Sigmoid colon (tissue), 7 donors: ENCODE measurements at regions of chr1 and their contacts with region 1.

Region 1: GRCh38 chr1:207402744-207403143 is 51.4 kb upstream of the CR2 start:
- DNase-seq: no peak
- H3K4me3 ChIP-seq: no peak overlapping the region
- H3K27ac ChIP-seq: no peak overlapping the region
- H3K4me1 ChIP-seq: no peaks in the 10 kb centered on the region
- H3K27me3 ChIP-seq: no peaks in the 10 kb centered on the region
- CTCF ChIP-seq: no peak
- EP300 ChIP-seq: no peak
- POLR2A ChIP-seq: no peak

Region 2: DNA sequence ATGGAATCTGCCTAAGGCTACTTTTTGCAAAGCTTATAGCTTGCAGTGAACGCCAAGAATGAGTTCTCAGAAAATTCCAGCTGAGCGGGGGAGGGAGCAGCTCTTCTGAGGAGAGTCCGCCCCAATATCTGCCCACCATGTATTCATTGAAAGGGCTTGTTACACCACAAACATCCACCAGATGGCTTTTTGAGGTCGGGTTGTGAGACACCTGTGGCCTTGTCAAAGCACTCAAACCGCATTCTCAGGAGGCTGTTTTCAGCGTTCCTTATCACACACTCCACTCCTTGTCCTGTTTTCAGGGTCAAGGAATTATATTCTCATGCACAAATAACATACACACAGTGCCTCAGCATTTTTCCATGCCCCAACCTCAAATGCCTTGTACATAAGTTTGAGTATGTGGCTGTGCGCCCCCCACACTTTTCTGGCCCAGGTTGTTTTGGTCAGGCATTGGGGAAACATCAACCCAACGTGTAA is 318.0 kb before region 1 on chr1:
- intact Hi-C with region 1: loop called (anchors 2 kb)
- DNase-seq: no peak
- H3K4me3 ChIP-seq: no peak overlapping the region
- H3K27ac ChIP-seq: no peak overlapping the region
- H3K4me1 ChIP-seq: no peaks in the 10 kb centered on the region
- H3K27me3 ChIP-seq: no peaks in the 10 kb centered on the region
- CTCF ChIP-seq: peak; percentile 7 to 59 (median 44)
- EP300 ChIP-seq: no peak
- POLR2A ChIP-seq: no peak